Vagina (tissue), 2 donors: ENCODE measurements at regions of chr2 and their contacts with region 1.

Region 1: GRCh38 chr2:234544659-234545611 is 48.1 kb upstream of the ARL4C start:
- DNase-seq: no peak
- H3K4me3 ChIP-seq: no peak overlapping the region
- H3K27ac ChIP-seq: no peak overlapping the region
- H3K4me1 ChIP-seq: peaks cover 9% of the 10 kb centered on the region
- H3K27me3 ChIP-seq: no peaks in the 10 kb centered on the region
- CTCF ChIP-seq: peak; percentile 56 to 82 (median 81)
- POLR2A ChIP-seq: no peak

Region 2: GRCh38 chr2:235116885-235117492 is 572.1 kb after region 1 on chr2:
- intact Hi-C with region 1: loop called (anchors 2 kb)
- DNase-seq: no peak
- H3K4me3 ChIP-seq: no peak overlapping the region
- H3K27ac ChIP-seq: no peak overlapping the region
- H3K4me1 ChIP-seq: no peaks in the 10 kb centered on the region
- H3K27me3 ChIP-seq: no peaks in the 10 kb centered on the region
- CTCF ChIP-seq: peak; percentile 33 to 75 (median 69)
- POLR2A ChIP-seq: no peak

Region 3: DNA sequence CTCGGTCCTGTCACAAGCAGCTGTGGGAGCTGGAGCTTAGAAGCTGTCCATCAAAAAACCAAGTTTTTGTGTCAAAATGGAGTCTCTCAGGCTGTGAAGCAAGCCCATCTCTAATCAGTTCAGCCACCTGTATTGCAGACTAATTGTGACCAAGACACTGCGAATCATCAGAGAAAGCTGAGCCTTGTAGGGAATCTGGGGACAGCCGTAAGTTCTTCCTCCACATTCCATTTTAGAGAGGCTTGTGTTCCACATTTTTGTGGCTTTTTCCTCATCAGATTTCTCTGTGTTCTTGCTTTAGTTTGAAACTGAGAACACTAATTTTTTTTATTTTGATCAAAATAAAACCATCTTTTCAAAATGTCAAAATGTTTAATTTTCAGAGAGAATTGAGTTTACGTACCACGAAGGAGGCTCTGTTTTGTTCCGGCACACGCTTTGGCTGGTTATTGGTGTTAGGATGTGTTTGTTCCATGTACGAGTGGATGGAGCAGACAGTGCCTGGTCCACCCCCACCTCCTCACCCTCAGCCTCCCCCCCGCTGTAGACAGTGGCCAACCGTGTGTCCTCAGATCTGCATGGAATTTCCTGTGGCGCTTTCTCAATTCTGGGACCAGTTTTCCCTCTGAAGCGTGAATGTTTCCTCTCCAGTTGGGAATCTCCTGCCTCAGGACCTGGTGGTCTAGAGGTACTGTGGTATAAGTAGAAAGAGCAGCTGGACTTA is 1089.7 kb after region 1 on chr2:
- intact Hi-C with region 1: no loop called
- DNase-seq: no peak
- H3K4me3 ChIP-seq: no peak overlapping the region
- H3K27ac ChIP-seq: no peak overlapping the region
- H3K4me1 ChIP-seq: peaks cover 16% of the 10 kb centered on the region
- H3K27me3 ChIP-seq: no peaks in the 10 kb centered on the region
- CTCF ChIP-seq: no peak
- POLR2A ChIP-seq: no peak